Mammary epithelial cell (primary cell): ENCODE measurements at regions of chr20 and their contacts with region 1.

Region 1: GRCh38 chr20:49832632-49833327 is 20.2 kb downstream of the SLC9A8 start:
- DNase-seq: peak; percentile 44
- H3K4me3 ChIP-seq: no peak overlapping the region
- H3K27ac ChIP-seq: no peak overlapping the region
- H3K4me1 ChIP-seq: peaks cover 14% of the 10 kb centered on the region
- H3K27me3 ChIP-seq: no peaks in the 10 kb centered on the region
- CTCF ChIP-seq: no peak

Region 2: DNA sequence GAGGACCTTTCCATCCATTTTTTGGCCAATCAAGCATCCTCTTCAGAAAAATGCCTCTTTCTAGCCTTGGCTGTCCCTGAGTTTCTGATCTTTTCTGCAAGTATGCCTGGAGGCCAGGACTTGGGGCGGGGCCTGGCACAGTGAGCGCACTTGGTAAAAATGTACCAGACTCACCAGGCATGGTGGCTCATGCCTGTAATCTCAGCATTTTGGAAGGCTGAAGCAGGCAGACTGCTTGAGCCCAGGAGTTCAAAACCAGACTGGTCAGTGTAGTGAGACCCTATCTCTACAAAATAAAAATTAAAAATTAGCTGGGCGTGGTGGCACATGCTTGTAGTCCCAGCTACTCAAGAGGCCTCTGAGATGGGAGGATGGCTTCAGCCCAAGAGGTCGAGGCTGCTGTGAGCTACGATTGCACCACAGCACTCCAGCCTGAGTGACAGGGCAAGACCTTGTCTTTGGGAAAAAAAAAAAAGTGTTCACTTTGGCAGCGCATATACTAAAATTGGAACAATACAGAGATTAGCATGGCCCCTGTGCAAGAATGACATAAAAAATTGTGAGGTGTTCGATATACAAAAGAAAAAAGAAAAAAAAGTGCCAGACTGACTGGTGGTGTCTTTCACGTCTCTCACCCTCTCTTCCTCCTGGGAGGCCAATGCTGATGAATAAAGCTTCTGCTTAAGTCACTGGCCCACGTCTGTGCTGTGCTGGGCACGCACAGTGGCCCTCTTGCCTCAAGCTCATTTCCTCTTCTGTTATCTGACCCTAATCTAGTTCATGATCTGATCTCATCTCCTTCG is 38.2 kb before region 1 on chr20:
- CTCF ChIA-PET with region 1: no interaction called
- dilution Hi-C with region 1: loop called (anchors 5 kb)
- in situ Hi-C with region 1: no loop called
- intact Hi-C with region 1: no loop called
- DNase-seq: no peak
- H3K4me3 ChIP-seq: no peak overlapping the region
- H3K27ac ChIP-seq: no peak overlapping the region
- H3K4me1 ChIP-seq: no peaks in the 10 kb centered on the region
- H3K27me3 ChIP-seq: no peaks in the 10 kb centered on the region
- CTCF ChIP-seq: no peak

Region 3: DNA sequence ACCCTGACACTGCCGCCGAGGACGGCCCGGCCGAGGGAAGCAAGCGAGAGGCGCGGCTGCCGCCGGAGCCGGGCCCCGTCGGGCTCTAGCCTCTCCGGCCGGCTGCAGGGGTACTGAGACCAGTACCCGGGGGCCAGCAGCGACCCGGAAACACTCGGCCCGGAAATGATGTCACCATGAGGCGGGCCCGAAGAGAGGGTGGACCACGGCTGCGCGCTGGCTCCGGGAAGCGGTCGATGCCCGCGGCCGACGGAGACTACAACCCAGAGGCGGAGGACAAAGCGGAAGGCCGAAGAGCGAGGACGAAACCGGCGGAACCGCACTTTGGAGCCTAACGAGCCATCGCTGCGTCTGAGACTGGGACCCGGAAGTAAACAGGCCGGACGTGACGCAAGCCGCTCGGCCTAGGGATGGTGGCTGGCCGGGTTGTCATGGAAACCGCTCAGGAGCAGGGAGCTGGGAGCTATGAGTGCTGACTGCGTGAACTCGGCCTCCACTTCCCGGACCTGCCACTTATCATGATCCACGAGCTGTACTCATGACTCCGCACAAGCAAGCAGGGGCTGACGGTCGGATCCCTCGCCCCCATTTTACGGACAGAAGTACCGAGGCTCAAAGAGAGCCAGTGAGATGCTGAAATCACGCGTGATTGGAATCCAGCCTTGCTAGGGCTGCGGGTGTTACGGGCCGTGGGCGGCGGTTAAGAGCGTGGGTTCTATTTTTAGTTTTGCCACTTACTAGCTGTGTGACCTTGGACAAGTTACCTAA is 82.8 kb after region 1 on chr20 and contains the start of gene SPATA2:
- CTCF ChIA-PET with region 1: no interaction called
- dilution Hi-C with region 1: no loop called
- in situ Hi-C with region 1: no loop called
- intact Hi-C with region 1: no loop called
- DNase-seq: peak; percentile 91
- H3K4me3 ChIP-seq: peak within 1 kb of the TSS; percentile 65 to 81 (median 66)
- H3K27ac ChIP-seq: peak within 1 kb of the TSS; percentile 97
- H3K4me1 ChIP-seq: peaks cover 21% of the 10 kb centered on the region
- H3K27me3 ChIP-seq: no peaks in the 10 kb centered on the region
- CTCF ChIP-seq: no peak
- total RNA-seq, gene SPATA2: 4.2 to 6.9 TPM

Region 4: GRCh38 chr20:49936153-49937027 is 103.6 kb after region 1 on chr20 and contains the start of gene RNF114:
- CTCF ChIA-PET with region 1: no interaction called
- dilution Hi-C with region 1: no loop called
- in situ Hi-C with region 1: no loop called
- intact Hi-C with region 1: no loop called
- DNase-seq: peak; percentile 82
- H3K4me3 ChIP-seq: peak within 1 kb of the TSS; percentile 43 to 97 (median 64)
- H3K27ac ChIP-seq: peak within 1 kb of the TSS; percentile 61
- H3K4me1 ChIP-seq: peaks cover 26% of the 10 kb centered on the region
- H3K27me3 ChIP-seq: no peaks in the 10 kb centered on the region
- CTCF ChIP-seq: no peak
- total RNA-seq, gene RNF114: 57.3 to 136 TPM